Activated B cell treated with CpG ODN at 0.5 μM for 24 hours (primary cell): ENCODE measurements at regions of chr2 and their contacts with region 1.

Region 1: DNA sequence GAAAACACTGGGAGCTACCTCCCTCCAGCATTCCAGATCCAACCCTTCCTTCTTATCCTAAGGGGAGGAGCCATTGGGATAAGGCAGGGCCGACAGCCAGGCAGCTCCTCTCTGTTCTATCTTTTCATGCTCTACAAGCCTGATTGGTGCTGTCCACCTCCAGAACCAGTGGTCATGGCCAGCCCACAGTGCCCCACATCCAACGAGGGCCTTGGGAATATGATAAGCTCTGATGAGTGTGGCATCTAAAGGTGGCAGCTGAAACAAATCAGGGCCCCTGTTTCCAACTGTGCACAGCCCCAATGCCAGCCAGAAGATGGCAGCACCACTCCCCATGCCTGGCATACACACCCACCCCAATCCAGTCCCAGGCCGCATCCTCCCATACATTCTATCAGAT is 329.3 kb downstream of the C1D start:
- DNase-seq: no peak
- ATAC-seq: no peak
- H3K4me3 Mint-ChIP-seq: no peak overlapping the region
- H3K27ac Mint-ChIP-seq: no peak overlapping the region
- H3K4me1 Mint-ChIP-seq: no peaks in the 10 kb centered on the region
- H3K27me3 Mint-ChIP-seq: no peaks in the 10 kb centered on the region
- CTCF ChIP-seq: no peak

Region 2: DNA sequence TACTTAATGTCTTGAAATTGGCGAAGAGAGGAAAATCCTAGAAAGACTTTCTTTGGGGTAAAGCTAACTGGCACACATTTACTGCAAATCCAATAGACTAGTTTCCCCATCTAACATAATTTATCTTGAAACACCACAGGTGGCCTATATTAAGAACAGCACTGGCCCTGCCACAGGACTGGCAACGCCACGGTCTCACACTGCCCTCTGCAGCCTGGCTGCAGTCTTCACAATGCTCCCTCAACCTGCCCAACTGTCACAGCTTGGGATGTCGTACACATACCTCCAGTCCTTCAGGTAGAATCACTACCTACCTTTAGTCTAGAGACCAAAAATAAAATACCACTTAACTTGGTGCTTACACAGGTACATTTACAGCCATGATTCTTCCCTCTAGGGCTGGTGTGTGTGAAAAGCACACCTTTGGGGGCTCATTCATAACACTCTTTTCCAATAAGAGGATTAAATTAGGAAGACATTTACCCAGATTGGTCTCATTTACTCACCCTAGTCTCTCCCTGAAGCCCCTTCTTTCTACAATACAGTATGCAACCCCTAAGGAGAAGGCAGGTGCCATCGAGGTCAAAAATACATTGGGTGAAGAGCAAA is 107.0 kb after region 1 on chr2:
- CTCF ChIA-PET with region 1: interaction called, 10 read pairs
- POLR2A ChIA-PET with region 1: no interaction called
- intact Hi-C with region 1: loop called (anchors 1 kb)
- DNase-seq: no peak
- ATAC-seq: peak; percentile 42
- H3K4me3 Mint-ChIP-seq: no peak overlapping the region
- H3K27ac Mint-ChIP-seq: no peak overlapping the region
- H3K4me1 Mint-ChIP-seq: no peaks in the 10 kb centered on the region
- H3K27me3 Mint-ChIP-seq: peaks cover 11% of the 10 kb centered on the region
- CTCF ChIP-seq: no peak

Region 3: DNA sequence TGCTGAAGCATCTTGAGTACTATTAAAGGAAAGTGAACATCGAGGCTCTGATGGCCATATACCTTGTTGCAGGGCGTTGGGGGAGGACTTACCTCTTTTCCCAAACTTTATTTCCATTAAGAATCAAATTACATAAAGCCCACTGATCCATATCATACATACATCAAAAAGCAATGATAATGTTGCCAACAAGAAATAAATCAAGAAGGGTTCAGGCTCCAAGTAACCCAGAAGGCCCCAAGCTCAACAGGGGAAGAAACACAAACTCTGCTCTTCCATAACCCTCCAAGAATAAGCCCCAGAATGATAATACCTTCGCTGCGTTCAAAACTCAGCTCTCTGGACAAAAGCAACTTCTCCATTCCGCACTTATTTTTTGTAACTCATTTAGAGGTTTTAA is 297.0 kb after region 1 on chr2:
- CTCF ChIA-PET with region 1: interaction called, 9 read pairs
- POLR2A ChIA-PET with region 1: no interaction called
- intact Hi-C with region 1: loop called (anchors 1 kb)
- DNase-seq: no peak
- ATAC-seq: no peak
- H3K4me3 Mint-ChIP-seq: no peak overlapping the region
- H3K27ac Mint-ChIP-seq: no peak overlapping the region
- H3K4me1 Mint-ChIP-seq: no peaks in the 10 kb centered on the region
- H3K27me3 Mint-ChIP-seq: peaks cover 10% of the 10 kb centered on the region
- CTCF ChIP-seq: no peak